ENCODE measurements at regions of chr9 and their contacts with region 1.

Region 1: DNA sequence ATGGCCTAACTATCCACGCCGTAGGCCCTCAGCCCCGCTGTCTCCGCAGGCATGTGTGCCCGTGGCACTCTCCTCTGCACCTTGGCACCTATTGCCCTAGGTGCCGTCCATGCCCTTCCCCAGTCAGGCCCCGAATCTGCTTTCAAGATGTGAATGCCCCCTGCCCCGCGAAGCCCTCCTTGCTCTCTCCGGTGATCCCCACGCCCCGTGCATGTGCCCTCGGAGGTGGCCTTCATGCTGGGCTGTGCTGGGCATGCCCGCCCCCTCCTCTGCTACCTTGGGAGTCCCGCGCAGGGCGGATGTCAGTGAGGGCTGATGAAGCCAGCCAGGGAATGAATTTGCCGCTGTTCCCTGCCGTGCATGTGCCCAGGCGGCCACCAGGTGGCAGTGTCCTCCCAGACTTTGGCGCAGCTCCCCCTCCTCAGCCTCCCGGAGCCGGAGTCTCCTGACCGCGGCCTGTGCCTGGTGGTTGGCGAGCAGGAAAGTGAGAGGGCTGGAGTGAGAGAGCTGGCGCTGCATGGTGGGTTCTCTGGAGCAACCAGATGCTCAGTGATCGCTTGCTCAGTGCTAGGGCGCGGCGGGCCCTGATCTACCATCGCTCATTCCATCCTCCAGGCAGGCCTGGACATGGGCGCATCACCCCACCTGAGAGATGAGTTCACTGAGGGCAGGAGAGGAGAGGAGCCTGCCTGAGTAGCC is 112.9 kb upstream of the LMX1B start:
- DNase-seq: peak; percentile 18 to 83 (median 58)
- ATAC-seq: peak; percentile 65 to 78 (median 70)
- H3K4me3 ChIP-seq: no peak overlapping the region
- H3K4me3 Mint-ChIP-seq: peak overlapping the region in 2 of 3 donors; percentile 47 to 67
- H3K27ac ChIP-seq: no peak overlapping the region
- H3K27ac Mint-ChIP-seq: no peak overlapping the region
- H3K4me1 ChIP-seq: peaks cover 0 to 28% of the 10 kb centered on the region in 2 experiments
- H3K4me1 Mint-ChIP-seq: peaks cover 5 to 16% (median 14%) of the 10 kb centered on the region in 3 donors
- H3K27me3 ChIP-seq: peaks cover 0 to 23% of the 10 kb centered on the region in 2 experiments
- H3K27me3 Mint-ChIP-seq: peaks cover 9% of the 10 kb centered on the region in 2 donors

Region 2: GRCh38 chr9:126558051-126558665 is 57.3 kb after region 1 on chr9:
- CTCF ChIA-PET with region 1: interaction called, 11 to 31 read pairs
- POLR2A ChIA-PET with region 1: no interaction called
- DNase-seq: peak; percentile 25 to 83 (median 52)
- ATAC-seq: peak; percentile 61 to 83 (median 76)
- H3K4me3 ChIP-seq: no peak overlapping the region
- H3K4me3 Mint-ChIP-seq: no peak overlapping the region
- H3K27ac ChIP-seq: no peak overlapping the region
- H3K27ac Mint-ChIP-seq: no peak overlapping the region
- H3K4me1 ChIP-seq: no peaks in the 10 kb centered on the region
- H3K4me1 Mint-ChIP-seq: no peaks in the 10 kb centered on the region
- H3K27me3 ChIP-seq: peaks cover 0 to 18% of the 10 kb centered on the region in 2 experiments
- H3K27me3 Mint-ChIP-seq: peaks cover 7 to 34% of the 10 kb centered on the region in 2 donors

Measured in T-cell (primary cell).